GM10248 (cell line): ENCODE measurements at regions of chr11 and their contacts with region 1.

Region 1: DNA sequence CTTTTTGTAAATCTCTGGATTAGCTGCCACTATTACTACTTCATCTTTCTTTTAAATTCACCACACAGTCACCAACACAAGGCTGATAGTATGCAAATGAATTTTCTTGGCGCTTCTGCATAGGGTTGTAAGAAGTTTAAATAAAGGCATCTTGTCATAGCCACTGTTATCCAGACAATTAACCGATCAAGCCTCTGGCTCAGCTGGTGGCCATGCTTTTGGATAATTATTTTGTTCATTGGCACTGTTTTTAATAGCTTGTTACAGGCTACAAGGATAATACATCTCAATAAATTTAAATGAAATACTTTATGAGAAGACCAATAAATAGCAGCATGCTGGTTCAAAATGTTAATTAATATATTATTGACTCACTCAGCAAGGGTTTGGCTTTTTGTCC is 1261.0 kb downstream of the FAM181B start:
- DNase-seq: no peak
- CTCF ChIP-seq: no peak

Region 2: DNA sequence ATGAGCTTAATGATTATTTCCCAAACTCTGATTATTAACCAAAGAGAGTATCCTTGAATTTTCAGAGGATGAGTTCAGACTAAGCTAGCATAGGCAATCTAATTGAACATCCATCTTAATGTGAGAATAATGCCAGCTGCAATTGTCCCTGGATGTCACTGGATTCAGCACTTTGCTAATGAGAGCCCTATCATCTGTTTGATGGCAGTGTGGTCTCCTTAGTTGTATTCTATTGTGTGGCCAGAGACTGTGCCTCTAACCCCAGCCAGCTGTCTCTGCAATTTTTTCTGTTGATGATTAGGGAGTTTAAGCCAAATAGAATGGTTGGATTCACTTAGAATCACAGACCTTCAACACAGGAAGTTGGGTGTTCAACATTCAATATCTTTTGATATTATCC is 11.6 kb after region 1 on chr11:
- CTCF ChIA-PET with region 1: interaction called, 23 read pairs
- POLR2A ChIA-PET with region 1: no interaction called
- DNase-seq: no peak
- CTCF ChIP-seq: no peak